Prostate gland (tissue), 2 donors: ENCODE measurements at regions of chr15 and their contacts with region 1.

Region 1: DNA sequence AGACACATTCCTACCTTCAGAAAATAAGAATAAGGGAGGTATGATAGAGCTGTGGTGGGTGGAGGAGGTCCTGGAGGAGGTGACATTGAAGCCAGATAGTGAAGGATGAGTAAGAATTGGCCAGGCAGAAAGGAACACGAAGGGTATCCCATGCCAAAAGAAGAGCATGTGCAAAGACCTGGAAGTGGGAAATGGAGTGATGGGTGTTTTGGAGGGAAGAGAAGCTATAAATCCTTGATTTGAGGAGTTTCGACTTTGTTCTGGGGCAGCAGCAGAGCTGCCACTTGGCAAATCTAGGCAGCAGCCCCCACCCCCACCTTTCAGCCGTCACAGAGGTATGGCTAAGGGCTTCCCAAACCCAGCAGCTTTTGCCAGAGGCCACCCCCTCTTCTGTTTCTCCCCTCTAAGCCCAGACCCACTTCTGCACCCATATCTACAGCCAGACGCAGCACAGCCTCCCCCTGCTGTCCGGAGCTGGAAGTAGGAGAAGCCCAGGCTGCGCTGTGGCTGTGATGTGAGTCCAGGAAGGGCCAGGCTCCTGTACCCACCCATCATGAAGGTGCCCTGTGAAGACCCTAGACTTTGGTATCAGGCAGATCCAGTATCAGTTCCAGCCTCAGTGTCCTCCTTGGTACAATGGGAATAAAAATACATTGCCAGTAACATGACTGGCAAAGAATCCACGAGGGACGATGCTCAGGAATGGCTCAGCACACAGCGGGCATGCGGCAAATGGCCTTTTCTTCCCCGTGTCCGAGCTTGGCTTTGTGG is 188.7 kb upstream of the LINGO1 start:
- DNase-seq: peak; percentile 47
- H3K4me3 ChIP-seq: no peak overlapping the region
- H3K27ac ChIP-seq: no peak overlapping the region
- H3K4me1 ChIP-seq: no peaks in the 10 kb centered on the region
- H3K27me3 ChIP-seq: peaks cover 13% of the 10 kb centered on the region
- CTCF ChIP-seq: peak in 3 of 4 experiments; percentile 46 to 71 (median 58)
- POLR2A ChIP-seq: no peak

Region 2: GRCh38 chr15:77633134-77633912 is 188.1 kb before region 1 on chr15:
- intact Hi-C with region 1: loop called (anchors 2 kb)
- DNase-seq: peak; percentile 74
- H3K4me3 ChIP-seq: peak overlapping the region; percentile 28 to 31
- H3K27ac ChIP-seq: no peak overlapping the region
- H3K4me1 ChIP-seq: peaks cover 3% of the 10 kb centered on the region
- H3K27me3 ChIP-seq: peaks cover 14% of the 10 kb centered on the region
- CTCF ChIP-seq: peak; percentile 96 to 99 (median 99)
- POLR2A ChIP-seq: no peak

Region 3: GRCh38 chr15:77659350-77660321 is 161.7 kb before region 1 on chr15:
- intact Hi-C with region 1: loop called (anchors 5 kb)
- DNase-seq: peak; percentile 19
- H3K4me3 ChIP-seq: no peak overlapping the region
- H3K27ac ChIP-seq: no peak overlapping the region
- H3K4me1 ChIP-seq: no peaks in the 10 kb centered on the region
- H3K27me3 ChIP-seq: no peaks in the 10 kb centered on the region
- CTCF ChIP-seq: peak in 1 of 4 experiments; percentile 40
- POLR2A ChIP-seq: no peak

Region 4: DNA sequence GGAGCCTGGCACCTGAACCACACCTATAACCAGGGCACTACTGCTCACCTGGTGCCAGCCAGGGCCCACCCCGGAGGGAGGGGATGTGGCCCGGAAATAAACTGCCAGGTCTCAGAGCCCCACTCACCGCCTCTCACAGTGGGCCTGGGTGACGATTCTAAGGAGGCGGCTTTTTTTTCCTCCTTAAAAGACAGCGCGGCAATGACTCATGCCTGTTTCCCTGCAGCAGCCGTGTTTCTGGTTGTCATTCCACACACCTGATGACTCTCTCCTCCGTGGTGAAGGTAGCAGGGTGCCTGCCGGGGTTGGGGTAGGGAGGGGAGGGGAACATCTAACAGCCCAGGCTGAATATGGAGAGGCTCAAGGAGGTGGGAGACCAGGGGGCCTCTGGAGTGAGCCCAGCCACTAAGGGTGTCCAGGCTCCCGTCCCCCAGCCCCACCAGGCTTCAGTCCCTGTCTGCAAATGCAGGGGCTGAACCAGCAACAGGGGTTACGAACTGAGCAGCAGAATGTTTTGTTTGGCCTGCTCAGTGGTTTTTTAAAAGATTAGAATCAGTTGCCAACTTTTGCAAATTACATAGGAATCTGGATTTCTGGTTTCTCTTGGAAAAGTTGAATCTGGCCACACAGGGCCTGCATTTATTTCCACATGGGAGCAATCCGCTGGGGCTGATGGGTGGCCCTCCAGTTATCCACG is 61.3 kb before region 1 on chr15:
- intact Hi-C with region 1: no loop called
- DNase-seq: no peak
- H3K4me3 ChIP-seq: no peak overlapping the region
- H3K27ac ChIP-seq: no peak overlapping the region
- H3K4me1 ChIP-seq: no peaks in the 10 kb centered on the region
- H3K27me3 ChIP-seq: peaks cover 3% of the 10 kb centered on the region
- CTCF ChIP-seq: no peak
- POLR2A ChIP-seq: no peak

Region 5: GRCh38 chr15:77870195-77871065 is 49.1 kb after region 1 on chr15:
- intact Hi-C with region 1: no loop called
- DNase-seq: peak; percentile 25
- H3K4me3 ChIP-seq: no peak overlapping the region
- H3K27ac ChIP-seq: no peak overlapping the region
- H3K4me1 ChIP-seq: no peaks in the 10 kb centered on the region
- H3K27me3 ChIP-seq: no peaks in the 10 kb centered on the region
- CTCF ChIP-seq: peak; percentile 48 to 80 (median 56)
- POLR2A ChIP-seq: no peak